Activated T-helper 1 cell treated with anti-CD3 and anti-CD28 coated beads, Interleukin-12 subunit alpha, Interleukin-12 subunit beta, Interleukin-2, Interleukin-4 antibody, amounts not matched to agents 30 ng/mL and 10 ng/mL and 1 ng/mL, durations not matched to agents 14 hours and 24 hours and 36 hours (primary cell): ENCODE measurements at regions of chr7 and their contacts with region 1.

Region 1: DNA sequence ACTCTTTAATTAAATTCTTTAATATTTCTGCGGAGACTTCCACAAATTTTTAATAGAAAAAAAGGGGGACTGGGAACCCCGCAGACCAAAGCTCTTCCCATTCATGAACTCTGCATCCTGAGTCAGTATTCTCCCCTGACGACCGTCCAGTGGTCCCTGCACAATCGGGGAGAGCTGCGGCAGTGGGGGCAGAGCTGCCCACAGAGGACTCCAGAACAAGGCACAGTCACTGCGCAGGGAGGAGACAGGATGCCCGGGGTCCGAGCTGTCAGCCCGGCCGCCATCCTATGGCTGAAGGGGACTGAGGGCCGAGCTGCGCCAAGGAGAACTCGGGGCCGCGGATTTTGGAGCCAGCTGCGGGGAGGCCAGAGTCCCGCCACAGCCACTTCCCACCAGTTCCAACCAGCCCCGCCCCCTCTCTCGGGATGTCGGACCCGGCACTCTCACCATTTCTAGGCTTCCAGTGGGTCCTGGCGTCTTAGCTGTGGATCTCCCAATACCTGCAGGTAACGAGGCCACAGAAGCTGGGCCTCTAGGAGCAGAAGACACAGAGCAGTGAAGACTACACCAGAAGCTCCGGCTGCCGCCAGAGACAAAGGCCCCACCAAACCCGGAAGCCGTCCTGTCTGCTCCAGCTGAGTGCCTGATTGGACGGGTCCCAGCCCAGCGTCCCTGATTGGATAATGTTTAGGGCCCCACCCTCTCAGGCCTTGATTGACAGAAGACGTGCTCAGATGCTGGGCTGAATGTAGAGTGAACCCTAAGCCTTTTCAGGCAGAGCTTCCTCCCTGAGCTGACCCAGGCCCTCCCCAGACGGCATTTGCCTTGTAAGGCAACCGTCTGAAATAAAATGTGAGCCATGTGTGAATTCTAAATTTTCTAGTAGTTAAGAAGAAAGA is at the start of gene ERV3-1:
- DNase-seq: peak; percentile 90
- H3K4me3 Mint-ChIP-seq: peak within 1 kb of the TSS; percentile 97
- H3K27ac Mint-ChIP-seq: peak within 1 kb of the TSS; percentile 91
- H3K4me1 Mint-ChIP-seq: peaks cover 29% of the 10 kb centered on the region
- H3K27me3 Mint-ChIP-seq: no peaks in the 10 kb centered on the region
- total RNA-seq, gene ERV3-1: 6.7 and 8.7 TPM in 2 replicates

Region 2: DNA sequence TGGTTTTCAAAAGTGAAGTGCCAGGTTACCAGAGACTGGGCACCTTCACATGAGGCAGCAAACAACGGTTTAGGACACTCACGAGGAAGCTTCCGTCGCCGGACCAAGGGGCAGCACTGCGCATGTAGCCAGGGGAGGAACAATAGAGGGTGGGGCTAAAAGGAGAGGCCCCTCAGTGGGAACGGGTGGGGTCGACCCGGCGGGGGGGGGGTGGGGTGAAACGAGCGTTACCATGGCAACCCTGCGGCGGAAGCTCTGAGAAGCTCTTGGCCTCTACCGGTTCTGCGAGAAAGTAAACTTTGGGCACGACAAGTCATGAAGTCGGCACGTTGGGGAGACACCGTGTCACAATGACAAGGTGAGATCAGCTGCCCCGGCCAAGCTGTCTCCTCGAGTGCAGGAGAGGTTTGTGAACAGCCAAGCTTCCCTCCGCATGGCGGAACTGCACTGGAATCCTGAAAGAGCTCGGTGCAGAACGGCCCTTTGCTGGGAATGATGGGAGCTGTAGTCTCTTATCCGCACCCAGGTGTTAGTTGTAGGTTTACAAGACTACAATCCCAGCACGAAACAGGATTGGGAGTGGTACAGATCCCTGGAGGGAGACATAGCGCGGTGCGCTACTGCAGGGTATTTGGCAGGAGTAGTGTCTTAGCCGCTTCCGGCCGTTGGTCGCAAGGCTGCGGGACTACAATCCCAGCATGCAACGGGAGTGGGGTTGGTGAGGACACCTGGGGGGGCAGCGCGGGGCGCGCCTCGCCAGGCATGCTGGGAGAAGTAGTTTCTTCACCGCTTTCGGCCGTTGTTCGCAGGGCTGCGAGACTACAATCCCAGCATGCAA is 1080.5 kb before region 1 on chr7:
- intact Hi-C with region 1: loop called (anchors 1 kb)
- DNase-seq: peak; percentile 74
- H3K4me3 Mint-ChIP-seq: peak overlapping the region; percentile 89
- H3K27ac Mint-ChIP-seq: peak overlapping the region; percentile 89
- H3K4me1 Mint-ChIP-seq: peaks cover 6% of the 10 kb centered on the region
- H3K27me3 Mint-ChIP-seq: no peaks in the 10 kb centered on the region

Region 3: GRCh38 chr7:64313740-64314491 is 692.4 kb before region 1 on chr7 and contains the start of gene ZNF736:
- intact Hi-C with region 1: loop called (anchors 1 kb)
- DNase-seq: peak; percentile 82
- H3K4me3 Mint-ChIP-seq: peak within 1 kb of the TSS; percentile 96
- H3K27ac Mint-ChIP-seq: peak within 1 kb of the TSS; percentile 95
- H3K4me1 Mint-ChIP-seq: peaks cover 25% of the 10 kb centered on the region
- H3K27me3 Mint-ChIP-seq: no peaks in the 10 kb centered on the region
- total RNA-seq, gene ZNF736: 19.8 and 21.3 TPM in 2 replicates

Region 4: GRCh38 chr7:64665980-64666662 is 340.2 kb before region 1 on chr7 and contains the start of gene ZNF107:
- intact Hi-C with region 1: loop called (anchors 1 kb)
- DNase-seq: peak; percentile 83
- H3K4me3 Mint-ChIP-seq: peak within 1 kb of the TSS; percentile 96
- H3K27ac Mint-ChIP-seq: peak within 1 kb of the TSS; percentile 89
- H3K4me1 Mint-ChIP-seq: peaks cover 16% of the 10 kb centered on the region
- H3K27me3 Mint-ChIP-seq: no peaks in the 10 kb centered on the region
- total RNA-seq, gene ZNF107: 12.6 and 13.5 TPM in 2 replicates

Region 5: GRCh38 chr7:64902806-64903721 is 103.3 kb before region 1 on chr7 and contains the start of gene ZNF273:
- intact Hi-C with region 1: loop called (anchors 1 kb)
- DNase-seq: peak; percentile 87
- H3K4me3 Mint-ChIP-seq: peak within 1 kb of the TSS; percentile 98
- H3K27ac Mint-ChIP-seq: peak within 1 kb of the TSS; percentile 93
- H3K4me1 Mint-ChIP-seq: peaks cover 29% of the 10 kb centered on the region
- H3K27me3 Mint-ChIP-seq: no peaks in the 10 kb centered on the region
- total RNA-seq, gene ZNF273: 8.5 and 9.3 TPM in 2 replicates

Region 6: DNA sequence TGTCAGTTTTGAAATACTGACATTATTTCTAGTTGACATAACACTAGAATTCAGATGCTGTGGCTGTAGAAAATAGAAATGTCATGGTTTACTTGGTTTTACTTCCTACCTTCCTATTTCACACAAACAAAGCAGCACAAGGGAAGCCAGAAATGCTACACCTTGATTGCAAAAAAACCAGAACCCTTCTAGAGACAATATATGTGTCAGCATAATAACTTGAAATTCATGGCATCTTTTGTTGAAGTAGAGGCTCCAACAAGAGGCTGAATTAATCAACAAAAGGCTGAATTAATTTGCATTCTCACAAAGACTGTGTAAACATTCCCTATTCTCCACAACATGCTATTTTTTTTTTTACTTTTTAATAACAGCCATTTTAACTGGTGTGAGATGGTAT is 40.7 kb before region 1 on chr7:
- intact Hi-C with region 1: no loop called
- DNase-seq: no peak
- H3K4me3 Mint-ChIP-seq: no peak overlapping the region
- H3K27ac Mint-ChIP-seq: no peak overlapping the region
- H3K4me1 Mint-ChIP-seq: no peaks in the 10 kb centered on the region
- H3K27me3 Mint-ChIP-seq: no peaks in the 10 kb centered on the region